H1 (cell line): ENCODE measurements at regions of chr10 and their contacts with region 1.

Region 1: DNA sequence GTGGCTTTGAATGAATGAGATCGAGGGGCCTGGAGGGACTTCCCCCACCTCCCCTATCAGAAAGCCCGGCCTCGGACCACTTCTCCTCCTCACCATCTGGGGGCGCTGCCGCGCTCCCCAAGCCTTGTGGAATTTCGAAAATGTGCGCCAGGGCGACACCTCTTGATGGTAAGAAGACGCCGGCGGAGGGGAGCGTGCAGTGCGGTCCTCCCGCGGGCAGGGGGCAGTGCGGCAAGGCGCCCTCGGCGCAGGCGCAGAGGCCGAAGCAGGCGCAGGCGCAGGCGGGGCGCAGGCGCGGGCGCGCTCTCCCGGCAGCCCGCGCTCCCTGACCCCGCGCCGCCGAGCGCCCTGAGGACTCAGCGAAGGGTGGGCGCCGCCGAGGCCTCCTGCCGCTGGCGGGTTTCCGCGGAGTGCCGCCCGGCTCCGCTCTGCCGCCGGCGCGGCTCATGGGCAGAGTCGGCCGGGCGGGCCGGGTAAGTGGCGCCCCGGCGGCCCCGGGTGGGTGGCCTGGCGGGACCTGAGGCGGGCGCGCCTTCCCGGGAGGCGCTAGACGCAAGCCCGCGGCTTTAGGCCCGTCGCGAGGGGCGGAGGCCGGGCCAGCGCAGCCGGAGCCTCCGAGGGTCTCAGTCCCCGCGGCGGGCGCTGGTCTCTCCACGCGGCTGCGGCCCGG is at the start of gene RBM17:
- DNase-seq: peak; percentile 95 to 100
- H3K4me3 ChIP-seq: peak within 1 kb of the TSS; percentile 88 to 94 (median 92)
- H3K27ac ChIP-seq: peak within 1 kb of the TSS; percentile 74; the same call in 1 of the 2 replicates
- H3K4me1 ChIP-seq: peaks cover 0 to 12% (median 7%) of the 10 kb centered on the region in 4 experiments; a peak in 4 of 7 replicates
- H3K27me3 ChIP-seq: no peaks in the 10 kb centered on the region
- CTCF ChIP-seq: peak; percentile 100
- EP300 ChIP-seq: 0 out of 3 replicates have a peak, but pooled peaks of 1 of the 2 experiments have one; percentile 80
- POLR2A ChIP-seq: peak in 1 of 2 experiments; percentile 69; a peak in 2 of 3 replicates
- RAD21 ChIP-seq: peak; percentile 71 to 80
- total RNA-seq, gene RBM17: 120 and 128 TPM in 2 replicates

Region 2: DNA sequence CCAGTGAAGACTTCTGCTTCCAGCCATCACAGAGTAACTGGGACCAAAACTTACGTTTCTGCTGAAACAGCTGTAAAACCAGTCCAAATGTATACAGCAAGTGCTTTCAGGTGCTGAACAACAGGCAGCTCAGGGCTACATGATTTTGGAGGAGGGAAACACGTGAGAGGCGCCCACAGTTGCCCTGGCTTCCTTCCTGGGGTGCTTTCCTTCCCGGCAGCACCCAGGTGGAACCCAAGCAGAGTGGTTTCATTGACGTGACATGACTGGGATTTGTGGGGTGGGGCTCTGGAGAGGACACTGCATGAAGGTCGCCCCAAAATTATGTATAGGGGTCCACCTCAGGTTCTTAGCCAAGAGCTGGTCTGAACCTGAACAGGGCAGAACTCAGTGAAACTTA is 60.9 kb before region 1 on chr10:
- CTCF ChIA-PET with region 1: no interaction called
- POLR2A ChIA-PET with region 1: no interaction called
- DNase-seq: no peak
- H3K4me3 ChIP-seq: no peak overlapping the region
- H3K27ac ChIP-seq: no peak overlapping the region
- H3K4me1 ChIP-seq: no peaks in the 10 kb centered on the region
- H3K27me3 ChIP-seq: no peaks in the 10 kb centered on the region
- CTCF ChIP-seq: no peak
- EP300 ChIP-seq: no peak
- POLR2A ChIP-seq: no peak
- RAD21 ChIP-seq: no peak

Region 3: DNA sequence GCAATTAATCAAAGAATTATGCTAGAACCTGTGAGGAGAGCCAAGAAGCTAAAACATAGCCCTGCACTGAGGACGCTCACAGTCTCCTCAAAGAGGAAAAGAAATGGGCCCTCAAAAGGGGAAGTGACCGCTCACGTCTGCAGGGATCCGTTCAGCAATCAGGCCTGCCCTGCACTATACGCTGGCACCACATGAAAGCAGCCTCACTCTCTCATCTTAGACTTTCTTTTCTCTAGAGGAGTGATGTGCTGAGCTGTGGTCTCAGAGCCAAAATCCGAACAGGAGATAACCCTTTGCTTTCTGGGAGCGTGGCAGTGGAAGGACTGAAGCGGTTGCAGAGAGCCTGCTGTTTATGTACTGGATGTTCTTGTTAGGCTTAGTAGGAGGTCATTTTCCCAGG is 20.4 kb before region 1 on chr10:
- CTCF ChIA-PET with region 1: interaction called, 43 read pairs
- POLR2A ChIA-PET with region 1: interaction called, 3 read pairs
- DNase-seq: no peak
- H3K4me3 ChIP-seq: no peak overlapping the region
- H3K27ac ChIP-seq: no peak overlapping the region
- H3K4me1 ChIP-seq: no peaks in the 10 kb centered on the region
- H3K27me3 ChIP-seq: no peaks in the 10 kb centered on the region
- CTCF ChIP-seq: no peak
- EP300 ChIP-seq: no peak
- POLR2A ChIP-seq: no peak
- RAD21 ChIP-seq: no peak

Region 4: DNA sequence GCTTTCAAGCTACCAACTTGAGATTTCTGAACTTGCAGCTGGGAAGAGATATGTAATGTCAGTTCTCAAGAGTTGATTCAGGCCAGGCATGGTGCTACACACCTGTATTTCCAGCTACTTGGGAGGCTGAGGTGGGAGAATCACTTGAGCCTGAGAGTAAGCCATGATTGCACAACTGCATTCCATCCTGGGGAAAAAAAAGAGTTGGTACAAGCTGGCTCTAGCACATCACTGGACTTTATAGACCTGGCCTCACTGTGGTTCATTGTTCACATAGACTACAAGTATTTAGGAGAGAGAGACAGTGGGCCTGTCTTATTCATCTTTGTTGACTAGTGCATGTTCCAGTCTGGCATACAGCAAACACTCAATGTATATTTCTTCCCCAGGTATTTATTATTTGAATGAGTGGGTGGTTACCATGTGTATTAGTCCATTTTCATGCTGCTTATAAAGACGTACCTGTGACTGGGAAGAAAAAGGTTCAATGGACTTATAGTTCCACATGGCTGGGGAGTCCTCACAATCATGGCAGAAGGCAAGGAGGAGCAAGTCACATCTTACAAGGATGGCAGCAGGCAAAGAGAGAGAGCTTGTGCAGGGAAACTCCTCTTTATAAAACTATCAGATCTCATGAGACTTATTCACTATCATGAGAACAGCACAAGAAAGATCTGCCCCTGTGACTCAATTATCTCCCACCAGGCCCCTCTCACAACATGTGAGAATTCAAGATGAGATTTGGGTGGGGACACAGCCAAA is 290.3 kb after region 1 on chr10:
- CTCF ChIA-PET with region 1: no interaction called
- POLR2A ChIA-PET with region 1: no interaction called
- DNase-seq: no peak
- H3K4me3 ChIP-seq: no peak overlapping the region
- H3K27ac ChIP-seq: no peak overlapping the region
- H3K4me1 ChIP-seq: no peaks in the 10 kb centered on the region
- H3K27me3 ChIP-seq: no peaks in the 10 kb centered on the region
- CTCF ChIP-seq: no peak
- EP300 ChIP-seq: no peak
- POLR2A ChIP-seq: no peak
- RAD21 ChIP-seq: no peak